IMR-90 (cell line): ENCODE measurements at regions of chr1 and their contacts with region 1.

Region 1: DNA sequence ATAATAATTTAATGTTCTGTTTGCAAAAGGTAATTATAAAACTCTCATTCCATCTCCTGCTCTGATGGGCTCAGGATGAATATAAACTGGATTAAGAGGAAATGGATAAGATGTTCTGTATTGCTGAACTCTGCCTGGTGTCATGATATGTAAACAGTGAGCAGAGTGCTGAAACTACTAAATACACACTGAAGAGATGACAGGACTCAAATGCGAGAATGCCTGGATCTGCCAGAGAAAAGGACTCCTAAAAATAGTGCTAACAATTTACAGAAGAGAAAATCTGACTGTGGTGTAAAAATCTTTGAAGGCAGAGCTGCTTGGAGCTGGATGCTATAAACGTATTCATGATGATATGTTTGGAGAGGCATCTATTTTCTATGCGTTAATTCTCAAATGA is 303.2 kb downstream of the RWDD3 start:
- DNase-seq: no peak
- ATAC-seq: no peak
- H3K4me3 ChIP-seq: no peak overlapping the region
- H3K27ac ChIP-seq: no peak overlapping the region
- H3K4me1 ChIP-seq: no peaks in the 10 kb centered on the region
- H3K27me3 ChIP-seq: no peaks in the 10 kb centered on the region
- CTCF ChIP-seq: no peak
- POLR2A ChIP-seq: no peak
- RAD21 ChIP-seq: no peak

Region 2: DNA sequence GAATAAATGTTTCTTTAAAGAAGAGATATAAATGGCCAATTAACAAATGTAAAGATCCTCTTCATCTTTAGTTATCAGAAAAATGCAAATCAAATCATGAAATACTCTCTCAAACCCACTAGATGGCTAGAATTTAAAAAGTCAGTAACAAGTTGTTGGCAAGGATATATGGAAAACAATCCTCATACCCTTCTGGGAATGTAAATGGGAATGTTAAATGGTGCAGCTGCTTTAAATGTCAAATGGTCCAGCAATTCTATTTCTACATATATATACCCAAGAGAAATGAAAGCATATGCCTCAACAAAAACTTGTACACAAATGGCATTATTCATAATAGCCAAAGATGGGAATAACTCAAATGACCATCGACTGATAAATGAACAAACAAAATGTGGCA is 19.7 kb before region 1 on chr1:
- CTCF ChIA-PET with region 1: no interaction called
- POLR2A ChIA-PET with region 1: no interaction called
- dilution Hi-C with region 1: no loop called
- in situ Hi-C with region 1: no loop called
- intact Hi-C with region 1: loop called (anchors 2 kb)
- DNase-seq: no peak
- ATAC-seq: no peak
- H3K4me3 ChIP-seq: no peak overlapping the region
- H3K27ac ChIP-seq: no peak overlapping the region
- H3K4me1 ChIP-seq: no peaks in the 10 kb centered on the region
- H3K27me3 ChIP-seq: no peaks in the 10 kb centered on the region
- CTCF ChIP-seq: no peak
- POLR2A ChIP-seq: no peak
- RAD21 ChIP-seq: no peak